CD4-positive, alpha-beta memory T cell (primary cell): ENCODE measurements at regions of chr3 and their contacts with region 1.

Region 1: GRCh38 chr3:47164007-47164881 is at the start of gene SETD2:
- DNase-seq: peak; percentile 83 to 90 (median 85)
- H3K4me3 ChIP-seq: peak within 1 kb of the TSS; percentile 94 to 95
- H3K4me3 Mint-ChIP-seq: peak within 1 kb of the TSS; percentile 97 to 100 (median 98)
- H3K27ac ChIP-seq: peak within 1 kb of the TSS; percentile 85
- H3K27ac Mint-ChIP-seq: peak within 1 kb of the TSS; percentile 85 to 100 (median 99)
- H3K4me1 ChIP-seq: peaks cover 50% of the 10 kb centered on the region
- H3K4me1 Mint-ChIP-seq: peaks cover 34 to 58% (median 46%) of the 10 kb centered on the region in 4 donors
- H3K27me3 ChIP-seq: no peaks in the 10 kb centered on the region
- H3K27me3 Mint-ChIP-seq: peaks cover 0 to 1% of the 10 kb centered on the region in 2 donors
- total RNA-seq, gene SETD2: 74.0 to 74.1 TPM

Region 2: DNA sequence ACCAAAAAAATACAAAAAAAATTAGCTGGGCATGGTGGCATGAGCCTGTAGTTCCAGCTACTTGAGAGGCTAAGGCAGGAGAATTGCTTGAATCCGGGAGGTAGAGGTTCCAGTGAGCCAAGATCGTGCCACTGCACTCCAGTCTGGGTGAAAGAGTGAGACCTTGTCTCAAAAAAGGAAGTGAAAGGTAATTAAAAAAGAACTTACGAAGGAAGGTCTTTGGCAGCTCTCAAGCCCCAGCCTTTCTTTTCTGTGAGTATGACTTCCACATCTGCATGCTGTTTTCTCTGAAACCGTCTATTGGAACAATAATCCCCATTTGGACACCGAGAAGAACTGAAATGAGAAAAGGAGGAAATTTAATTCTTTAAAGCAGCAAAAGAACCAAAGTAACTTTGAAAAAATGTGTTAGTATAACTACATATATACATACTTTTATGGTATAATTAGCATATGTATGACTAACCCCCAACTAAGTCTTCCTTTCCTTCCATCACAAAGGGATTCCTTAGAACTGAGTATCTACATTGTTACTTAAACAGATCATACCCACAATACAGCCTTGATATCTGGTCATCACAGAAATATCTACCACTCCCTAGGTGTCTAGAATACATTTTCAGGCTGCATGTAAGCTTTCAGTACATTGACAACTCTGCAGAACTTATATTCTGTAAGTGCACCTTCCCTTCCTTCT is 50.4 kb before region 1 on chr3:
- CTCF ChIA-PET with region 1: interaction called, 3 read pairs
- POLR2A ChIA-PET with region 1: interaction called, 12 read pairs
- intact Hi-C with region 1: loop called (anchors 5 kb)
- DNase-seq: no peak
- H3K4me3 ChIP-seq: no peak overlapping the region
- H3K4me3 Mint-ChIP-seq: no peak overlapping the region
- H3K27ac ChIP-seq: no peak overlapping the region
- H3K27ac Mint-ChIP-seq: peak overlapping the region in 1 of 7 donors; percentile 28
- H3K4me1 ChIP-seq: peaks cover 9% of the 10 kb centered on the region
- H3K4me1 Mint-ChIP-seq: peaks cover 12 to 18% (median 16%) of the 10 kb centered on the region in 4 donors
- H3K27me3 ChIP-seq: no peaks in the 10 kb centered on the region
- H3K27me3 Mint-ChIP-seq: no peaks in the 10 kb centered on the region

Region 3: GRCh38 chr3:47152578-47152977 is 11.7 kb before region 1 on chr3:
- CTCF ChIA-PET with region 1: interaction called, 5 read pairs
- POLR2A ChIA-PET with region 1: interaction called, 18 read pairs
- intact Hi-C with region 1: no loop called
- DNase-seq: no peak
- H3K4me3 ChIP-seq: no peak overlapping the region
- H3K4me3 Mint-ChIP-seq: peak overlapping the region in 6 of 8 donors; percentile 3 to 60 (median 38)
- H3K27ac ChIP-seq: no peak overlapping the region
- H3K27ac Mint-ChIP-seq: peak overlapping the region in 1 of 7 donors; percentile 78
- H3K4me1 ChIP-seq: peaks cover 79% of the 10 kb centered on the region
- H3K4me1 Mint-ChIP-seq: peaks cover 50 to 84% (median 68%) of the 10 kb centered on the region in 4 donors
- H3K27me3 ChIP-seq: no peaks in the 10 kb centered on the region
- H3K27me3 Mint-ChIP-seq: no peaks in the 10 kb centered on the region

Region 4: GRCh38 chr3:47324278-47324865 is 160.1 kb after region 1 on chr3:
- CTCF ChIA-PET with region 1: interaction called, 28 read pairs
- POLR2A ChIA-PET with region 1: interaction called, 4 read pairs
- intact Hi-C with region 1: loop called (anchors 1 kb)
- DNase-seq: peak; percentile 47 to 63 (median 48)
- H3K4me3 ChIP-seq: no peak overlapping the region
- H3K4me3 Mint-ChIP-seq: no peak overlapping the region
- H3K27ac ChIP-seq: no peak overlapping the region
- H3K27ac Mint-ChIP-seq: peak overlapping the region in 1 of 7 donors; percentile 37
- H3K4me1 ChIP-seq: no peaks in the 10 kb centered on the region
- H3K4me1 Mint-ChIP-seq: peaks cover 0 to 5% (median 1%) of the 10 kb centered on the region in 4 donors
- H3K27me3 ChIP-seq: no peaks in the 10 kb centered on the region
- H3K27me3 Mint-ChIP-seq: no peaks in the 10 kb centered on the region

Region 5: DNA sequence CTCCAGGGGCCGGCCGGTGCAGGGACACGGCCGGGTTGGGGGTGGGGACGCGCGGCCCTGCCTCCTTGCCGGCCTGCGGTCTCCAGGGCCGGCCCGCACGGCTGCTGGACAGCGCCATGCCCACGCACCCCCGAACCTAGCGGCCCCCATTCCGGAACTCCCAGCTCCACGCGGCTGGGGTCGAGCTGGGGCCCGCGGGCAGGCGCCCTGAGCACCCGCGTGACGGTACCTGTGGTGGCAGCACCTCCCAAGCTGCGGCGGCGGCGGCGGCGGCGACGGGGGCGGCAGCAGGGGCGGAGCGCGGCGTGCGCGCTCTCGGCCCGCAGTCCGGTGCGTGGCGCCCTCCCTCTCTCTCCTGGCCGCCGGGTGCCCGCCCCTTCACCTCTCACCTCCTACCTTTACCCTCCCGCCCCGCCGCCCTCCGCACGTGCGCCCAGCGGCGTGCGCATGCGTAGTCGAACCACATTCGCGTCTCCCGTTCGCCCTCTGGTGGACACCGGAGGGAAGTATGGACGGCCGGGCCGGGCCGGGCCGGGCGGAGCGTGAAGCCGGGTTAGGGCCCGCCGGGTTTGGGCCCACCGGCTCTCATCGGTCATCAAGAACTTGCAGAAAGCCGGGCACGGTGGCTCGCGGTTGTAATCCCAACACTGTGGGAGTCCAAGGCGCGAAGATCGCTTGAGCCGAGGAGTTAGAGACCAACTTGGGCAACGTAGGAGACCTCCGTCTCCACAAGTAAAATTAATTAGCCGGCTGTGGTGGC is 311.5 kb after region 1 on chr3 and contains the start of gene SCAP:
- CTCF ChIA-PET with region 1: interaction called, 3 read pairs
- POLR2A ChIA-PET with region 1: interaction called, 9 read pairs
- intact Hi-C with region 1: loop called (anchors 1 kb)
- DNase-seq: peak; percentile 94 to 95 (median 95)
- H3K4me3 ChIP-seq: peak within 1 kb of the TSS; percentile 43 to 61
- H3K4me3 Mint-ChIP-seq: peak within 1 kb of the TSS; percentile 84 to 97 (median 92)
- H3K27ac ChIP-seq: peak within 1 kb of the TSS; percentile 72
- H3K27ac Mint-ChIP-seq: peak within 1 kb of the TSS; percentile 84 to 94 (median 93)
- H3K4me1 ChIP-seq: peaks cover 26% of the 10 kb centered on the region
- H3K4me1 Mint-ChIP-seq: peaks cover 25 to 48% (median 36%) of the 10 kb centered on the region in 4 donors
- H3K27me3 ChIP-seq: no peaks in the 10 kb centered on the region
- H3K27me3 Mint-ChIP-seq: no peaks in the 10 kb centered on the region
- total RNA-seq, gene SCAP: 85.7 to 88.1 TPM